Panc1 (cell line): ENCODE measurements at regions of chr6 and their contacts with region 1.

Region 1: DNA sequence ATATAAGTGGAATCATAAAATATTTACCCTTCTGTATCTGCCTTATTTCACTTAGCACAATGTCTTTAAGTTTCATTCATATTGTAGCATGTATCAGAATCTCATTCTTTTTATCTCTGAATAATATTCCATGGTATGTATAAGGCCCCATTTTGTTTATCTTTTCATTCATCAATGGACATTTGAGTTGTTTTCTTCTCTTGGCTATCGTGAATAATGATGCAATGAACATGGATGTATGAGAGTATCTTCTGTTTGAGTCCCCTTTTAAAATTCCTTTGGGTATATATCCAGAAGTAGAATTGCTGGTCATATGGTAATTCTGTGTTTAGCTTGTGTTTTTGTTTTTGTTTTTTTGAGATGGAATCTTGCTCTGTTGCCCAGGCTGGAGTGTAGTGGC is 39.6 kb downstream of the E2F3 start:
- DNase-seq: no peak
- ATAC-seq: no peak
- H3K4me3 ChIP-seq: no peak overlapping the region
- H3K27ac ChIP-seq: no peak overlapping the region
- H3K4me1 ChIP-seq: no peaks in the 10 kb centered on the region
- H3K27me3 ChIP-seq: no peaks in the 10 kb centered on the region
- CTCF ChIP-seq: no peak

Region 2: DNA sequence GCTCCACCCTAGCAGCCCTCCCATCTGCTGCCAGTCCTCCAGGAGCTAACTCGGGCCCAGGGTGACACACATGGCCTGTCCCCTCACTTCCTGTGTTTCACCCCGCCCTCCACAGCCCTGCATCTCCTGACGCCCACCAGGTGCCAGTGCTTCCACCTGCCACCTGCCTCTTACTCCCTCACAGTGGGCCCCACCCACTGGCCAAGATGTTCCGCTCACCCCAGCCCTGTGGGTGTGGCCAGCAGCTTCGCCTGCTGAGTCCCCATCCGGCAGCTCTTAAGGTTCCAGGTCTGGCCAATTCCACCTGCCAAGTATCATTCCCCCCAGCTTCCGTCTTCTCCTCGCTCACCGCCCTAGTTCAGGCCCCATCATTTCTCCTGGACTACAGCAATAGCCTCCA is 413.1 kb before region 1 on chr6:
- CTCF ChIA-PET with region 1: no interaction called
- POLR2A ChIA-PET with region 1: no interaction called
- in situ Hi-C with region 1: no loop called
- intact Hi-C with region 1: no loop called
- DNase-seq: no peak
- ATAC-seq: no peak
- H3K4me3 ChIP-seq: no peak overlapping the region
- H3K27ac ChIP-seq: no peak overlapping the region
- H3K4me1 ChIP-seq: no peaks in the 10 kb centered on the region
- H3K27me3 ChIP-seq: peaks cover 4% of the 10 kb centered on the region; the same call in 1 of the 2 replicates
- CTCF ChIP-seq: no peak

Region 3: GRCh38 chr6:20279608-20280287 is 161.5 kb before region 1 on chr6:
- CTCF ChIA-PET with region 1: no interaction called
- POLR2A ChIA-PET with region 1: interaction called, 10 read pairs
- in situ Hi-C with region 1: no loop called
- intact Hi-C with region 1: no loop called
- DNase-seq: no peak
- ATAC-seq: no peak
- H3K4me3 ChIP-seq: no peak overlapping the region
- H3K27ac ChIP-seq: no peak overlapping the region
- H3K4me1 ChIP-seq: no peaks in the 10 kb centered on the region
- H3K27me3 ChIP-seq: 0 out of 2 replicates have a peak, but pooled peaks cover 5% of the 10 kb centered on the region
- CTCF ChIP-seq: no peak